ENCODE measurements at regions of chr10 and their contacts with region 1.

Region 1: GRCh38 chr10:132229834-132230556 is 43.2 kb downstream of the DPYSL4 start:
- DNase-seq: peak in 2 of 3 donors; percentile 72 to 75
- ATAC-seq: peak; percentile 22 to 32
- H3K4me3 ChIP-seq: no peak overlapping the region
- H3K27ac ChIP-seq: no peak overlapping the region
- H3K4me1 ChIP-seq: no peaks in the 10 kb centered on the region
- H3K27me3 ChIP-seq: no peaks in the 10 kb centered on the region

Region 2: DNA sequence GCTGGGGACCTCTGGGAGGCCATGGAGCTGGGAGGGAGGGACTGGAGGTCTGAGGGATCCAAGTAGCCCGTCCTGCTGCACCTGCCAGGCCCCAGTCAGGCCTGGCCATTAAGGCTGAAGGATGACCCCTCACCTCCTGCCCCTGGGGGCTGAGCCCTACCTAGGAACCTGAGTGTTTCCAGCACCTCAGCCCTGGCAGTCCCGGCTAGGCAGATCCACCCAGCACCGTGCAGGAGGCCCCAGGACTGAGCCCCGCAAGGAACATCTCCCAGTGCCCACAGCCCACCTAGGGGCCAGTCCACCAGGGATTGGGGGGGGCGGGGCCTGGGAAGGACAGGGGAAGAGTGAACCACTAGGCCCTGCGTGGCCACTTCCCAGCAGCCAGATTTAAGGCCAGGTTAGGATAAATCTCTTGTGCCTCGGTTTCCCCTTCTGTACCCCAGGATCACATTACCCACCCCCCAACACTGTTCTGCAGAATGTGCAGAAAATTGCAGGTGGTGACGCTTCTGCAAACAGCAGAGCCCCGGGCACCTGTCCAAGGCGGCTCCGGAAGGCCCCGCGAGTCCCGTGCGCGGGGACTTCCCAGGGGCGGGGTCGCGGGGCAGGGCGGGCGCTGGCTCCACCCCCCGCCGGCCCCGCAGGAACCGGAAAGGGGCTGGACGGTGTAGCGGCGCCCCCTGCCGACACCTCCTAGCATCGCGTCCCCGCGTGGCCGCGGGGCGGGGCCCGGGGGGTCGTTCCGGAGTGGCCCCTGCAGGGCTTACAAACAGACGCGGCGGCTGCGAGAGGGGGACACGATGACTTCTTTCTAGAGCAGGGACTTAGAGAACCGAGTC is 222.9 kb after region 1 on chr10:
- intact Hi-C with region 1: loop called in 1 of 4 experiments (anchors 5 kb)
- DNase-seq: peak; percentile 83 to 94 (median 94)
- ATAC-seq: peak; percentile 77 to 79
- H3K4me3 ChIP-seq: no peak overlapping the region
- H3K27ac ChIP-seq: no peak overlapping the region
- H3K4me1 ChIP-seq: no peaks in the 10 kb centered on the region
- H3K27me3 ChIP-seq: no peaks in the 10 kb centered on the region